Activated CD4-positive, alpha-beta memory T cell treated with anti-CD3 and anti-CD28 coated beads for 36 hours (primary cell): ENCODE measurements at regions of chr20 and their contacts with region 1.

Region 1: DNA sequence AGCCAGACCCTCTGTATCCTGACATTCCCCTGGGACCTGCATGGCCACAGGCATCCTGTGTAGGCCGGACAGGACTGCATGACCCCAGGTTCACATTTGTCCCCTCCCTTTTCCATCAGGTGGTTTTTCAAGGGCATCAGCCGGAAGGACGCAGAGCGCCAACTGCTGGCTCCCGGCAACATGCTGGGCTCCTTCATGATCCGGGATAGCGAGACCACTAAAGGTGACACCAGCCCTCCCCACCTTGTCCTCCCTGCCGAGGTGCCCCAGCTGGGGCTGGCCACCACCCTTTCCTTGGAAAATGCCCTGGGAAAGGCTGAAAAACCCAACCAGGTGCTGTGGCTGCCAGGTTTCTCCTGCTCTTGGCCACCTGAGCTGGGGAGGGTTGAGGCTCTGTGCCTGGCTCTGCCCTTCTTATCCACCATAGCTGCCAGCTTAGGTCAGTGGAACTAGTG is 27.6 kb downstream of the HCK start:
- DNase-seq: no peak
- H3K4me3 Mint-ChIP-seq: no peak overlapping the region
- H3K27ac Mint-ChIP-seq: no peak overlapping the region
- H3K4me1 Mint-ChIP-seq: no peaks in the 10 kb centered on the region
- H3K27me3 Mint-ChIP-seq: peaks cover 12% of the 10 kb centered on the region

Region 2: DNA sequence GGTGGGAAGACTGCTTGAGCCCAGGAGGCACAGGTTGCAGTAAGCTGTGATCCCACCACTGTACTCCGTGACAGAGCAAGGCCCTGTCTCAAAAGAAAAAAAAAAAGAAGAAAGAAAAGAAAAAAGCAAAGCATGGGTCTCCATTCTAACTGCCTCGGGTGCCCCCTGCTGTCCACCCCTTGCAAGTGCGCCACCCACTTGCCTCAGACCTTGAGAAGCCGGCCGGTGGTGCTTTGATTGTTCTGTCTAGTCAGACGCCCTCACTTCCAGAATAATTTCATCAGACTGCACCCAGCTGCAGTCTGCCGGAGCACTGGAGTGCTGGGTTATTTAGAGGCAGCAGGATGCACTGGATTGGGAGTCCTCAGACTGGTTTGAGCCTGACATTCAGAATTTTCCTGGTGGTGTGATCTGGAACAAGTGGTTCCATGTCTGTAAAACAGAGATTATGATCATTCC is 12.2 kb after region 1 on chr20:
- CTCF ChIA-PET with region 1: interaction called, 26 read pairs
- POLR2A ChIA-PET with region 1: no interaction called
- intact Hi-C with region 1: no loop called
- DNase-seq: peak; percentile 86
- H3K4me3 Mint-ChIP-seq: no peak overlapping the region
- H3K27ac Mint-ChIP-seq: no peak overlapping the region
- H3K4me1 Mint-ChIP-seq: peaks cover 2% of the 10 kb centered on the region
- H3K27me3 Mint-ChIP-seq: peaks cover 3% of the 10 kb centered on the region